OCI-LY7 (cell line): ENCODE measurements at regions of chr13 and their contacts with region 1.

Region 1: GRCh38 chr13:49495783-49496762 is at the start of gene PHF11:
- DNase-seq: peak; percentile 94
- H3K4me3 ChIP-seq: peak within 1 kb of the TSS; percentile 76
- H3K27ac ChIP-seq: peak within 1 kb of the TSS; percentile 91
- H3K4me1 ChIP-seq: peaks cover 44% of the 10 kb centered on the region
- CTCF ChIP-seq: peak; percentile 36; the same call in 1 of the 2 replicates
- total RNA-seq, gene PHF11: 29.9 and 32.8 TPM in 2 replicates

Region 2: DNA sequence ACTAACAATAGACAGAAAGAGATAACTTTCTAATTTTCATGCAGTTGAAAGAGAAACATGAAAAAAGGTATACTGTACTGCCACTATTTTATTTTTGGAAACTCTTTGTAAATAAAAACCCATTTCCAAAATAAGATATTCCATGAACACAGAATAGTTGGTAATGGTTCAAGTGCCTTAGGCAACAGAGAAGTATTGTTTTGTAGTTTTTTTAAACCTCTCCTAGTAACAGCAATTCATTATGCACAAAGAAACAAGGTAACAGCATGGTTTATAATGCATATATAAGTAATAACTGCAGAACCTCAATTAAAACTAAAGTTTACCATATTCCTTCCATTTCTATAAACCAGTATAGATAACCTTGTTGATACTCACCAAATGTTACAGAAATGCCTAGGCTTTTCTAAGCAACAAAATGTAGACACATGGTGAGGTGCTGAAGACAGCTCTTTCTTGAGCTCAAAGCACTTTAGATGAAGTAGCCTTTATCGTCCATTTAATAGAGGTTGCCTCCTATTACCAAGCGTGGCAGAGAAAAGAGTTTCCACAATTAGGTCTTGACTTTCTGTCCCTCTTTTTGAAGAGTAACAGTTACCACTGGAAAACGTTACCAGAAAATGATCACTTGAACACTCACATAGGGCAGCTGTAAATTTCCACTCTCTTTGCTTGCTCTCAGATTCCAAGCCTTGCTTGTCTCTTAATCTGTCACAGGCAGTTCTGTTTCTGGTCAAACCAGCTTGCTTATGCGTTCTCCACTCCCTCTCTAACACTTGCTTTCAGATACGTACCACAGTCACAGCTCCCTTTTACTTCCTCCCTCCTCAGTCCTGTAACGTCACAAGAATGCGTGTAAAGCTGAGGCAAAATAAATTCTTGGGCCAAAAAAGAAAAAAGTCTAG is 95.1 kb before region 1 on chr13:
- CTCF ChIA-PET with region 1: no interaction called
- POLR2A ChIA-PET with region 1: no interaction called
- intact Hi-C with region 1: no loop called
- DNase-seq: peak; percentile 87
- H3K4me3 ChIP-seq: peak overlapping the region; percentile 75
- H3K27ac ChIP-seq: peak overlapping the region; percentile 86
- H3K4me1 ChIP-seq: peaks cover 35% of the 10 kb centered on the region
- CTCF ChIP-seq: no peak

Region 3: DNA sequence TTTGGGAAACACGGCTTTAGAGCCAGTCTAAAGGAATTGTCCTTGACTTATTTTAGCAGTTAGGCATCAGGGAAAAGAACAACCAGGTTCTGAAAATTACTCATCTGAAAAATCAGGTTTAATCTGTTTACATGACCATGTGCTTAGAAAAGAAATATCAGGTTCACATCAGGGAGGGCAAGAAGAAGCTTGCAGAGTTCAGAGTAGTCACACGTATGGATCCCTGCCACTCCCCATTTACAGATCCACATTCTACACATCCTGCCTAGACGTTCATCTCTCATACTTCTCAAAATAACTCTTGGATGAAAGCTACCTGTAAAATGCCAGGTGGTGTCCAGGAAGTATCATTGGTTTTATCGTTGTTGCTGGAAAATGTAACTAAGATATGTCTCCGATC is 14.3 kb before region 1 on chr13:
- CTCF ChIA-PET with region 1: no interaction called
- POLR2A ChIA-PET with region 1: interaction called, 10 read pairs
- intact Hi-C with region 1: no loop called
- DNase-seq: no peak
- H3K4me3 ChIP-seq: no peak overlapping the region
- H3K27ac ChIP-seq: no peak overlapping the region
- H3K4me1 ChIP-seq: no peaks in the 10 kb centered on the region
- CTCF ChIP-seq: no peak

Region 4: DNA sequence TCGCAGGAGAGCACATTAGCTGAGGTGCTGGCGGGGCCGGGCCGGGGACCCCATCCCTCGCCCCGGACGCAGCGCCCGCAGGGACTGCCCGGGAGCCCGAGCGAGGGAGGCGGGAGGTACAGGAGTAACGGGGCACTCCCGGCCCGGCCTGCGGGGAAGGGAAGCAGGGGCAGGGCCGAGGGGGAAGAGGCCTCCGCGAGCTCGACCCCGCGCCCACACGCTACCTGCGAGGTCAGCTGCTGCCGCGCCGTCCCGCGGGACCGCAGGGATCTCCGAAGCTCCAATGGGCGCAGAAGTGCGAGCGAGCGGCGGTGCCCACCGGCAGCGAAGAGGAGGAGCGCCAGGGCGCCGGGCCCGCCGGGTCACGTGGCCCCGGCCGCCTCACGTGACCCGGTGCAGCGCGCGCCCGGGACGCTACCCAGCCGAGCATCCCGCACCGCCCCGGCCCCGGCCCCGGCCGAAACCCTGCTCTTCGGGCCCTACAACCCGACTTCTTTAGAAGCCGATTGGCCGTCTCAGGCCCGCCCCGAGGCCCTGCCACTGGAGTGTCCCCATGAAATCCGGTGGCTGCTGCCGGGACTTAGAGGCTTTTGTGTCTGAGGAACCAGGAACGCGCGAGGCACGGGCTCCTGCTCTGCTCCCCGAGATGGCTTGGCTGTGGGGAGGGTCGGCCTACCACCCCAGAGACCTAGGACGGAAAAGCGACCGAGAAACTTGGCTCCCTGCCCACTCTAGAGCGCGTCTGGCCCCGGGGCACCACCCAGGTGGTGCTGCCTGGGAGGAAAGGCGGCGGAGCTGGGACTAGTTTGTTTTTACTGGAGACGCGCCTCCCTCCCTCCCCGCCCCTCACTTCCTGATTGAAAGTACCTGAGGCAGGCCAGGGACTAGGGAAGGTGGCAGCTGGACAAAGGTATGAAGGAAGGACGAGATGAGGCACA is 89.4 kb after region 1 on chr13 and contains the start of gene RCBTB1:
- CTCF ChIA-PET with region 1: no interaction called
- POLR2A ChIA-PET with region 1: no interaction called
- intact Hi-C with region 1: loop called (anchors 5 kb)
- DNase-seq: peak; percentile 84
- H3K4me3 ChIP-seq: peak within 1 kb of the TSS; percentile 90
- H3K27ac ChIP-seq: peak within 1 kb of the TSS; percentile 71
- H3K4me1 ChIP-seq: peaks cover 31% of the 10 kb centered on the region
- CTCF ChIP-seq: no peak
- total RNA-seq, gene RCBTB1: 13.4 and 15.1 TPM in 2 replicates

Region 5: GRCh38 chr13:49908637-49909036 is 412.6 kb after region 1 on chr13:
- CTCF ChIA-PET with region 1: no interaction called
- POLR2A ChIA-PET with region 1: no interaction called
- intact Hi-C with region 1: no loop called
- DNase-seq: peak; percentile 23
- H3K4me3 ChIP-seq: no peak overlapping the region
- H3K27ac ChIP-seq: no peak overlapping the region
- H3K4me1 ChIP-seq: no peaks in the 10 kb centered on the region
- CTCF ChIP-seq: peak; percentile 68

Region 6: DNA sequence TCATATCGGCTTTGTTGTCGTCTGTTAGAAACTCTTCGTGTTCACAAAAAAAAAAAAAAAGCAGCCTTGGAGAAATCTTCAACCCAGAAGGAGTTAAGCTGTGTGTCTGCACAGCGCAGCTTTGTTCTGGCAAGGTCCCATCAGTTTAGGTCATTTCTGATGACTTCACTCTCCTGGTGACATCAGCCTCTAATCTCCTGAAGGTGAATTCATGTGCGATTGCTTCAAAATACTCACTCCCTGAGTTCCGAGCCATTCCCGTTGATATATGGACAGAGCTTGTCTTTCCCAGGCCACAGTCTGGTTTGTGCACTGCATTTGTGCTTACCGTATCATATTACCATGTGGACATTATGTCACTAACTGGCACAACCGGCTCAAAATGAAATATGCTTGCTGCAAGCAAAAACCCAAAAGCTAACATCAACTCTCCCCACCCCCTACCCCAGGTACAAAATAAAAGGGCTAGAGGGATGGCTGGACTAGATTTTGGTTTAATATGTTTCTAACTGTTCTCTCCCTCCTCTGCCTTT is 861.6 kb after region 1 on chr13:
- CTCF ChIA-PET with region 1: no interaction called
- POLR2A ChIA-PET with region 1: no interaction called
- intact Hi-C with region 1: no loop called
- DNase-seq: no peak
- H3K4me3 ChIP-seq: no peak overlapping the region
- H3K27ac ChIP-seq: no peak overlapping the region
- H3K4me1 ChIP-seq: peaks cover 38% of the 10 kb centered on the region
- CTCF ChIP-seq: no peak

Region 7: DNA sequence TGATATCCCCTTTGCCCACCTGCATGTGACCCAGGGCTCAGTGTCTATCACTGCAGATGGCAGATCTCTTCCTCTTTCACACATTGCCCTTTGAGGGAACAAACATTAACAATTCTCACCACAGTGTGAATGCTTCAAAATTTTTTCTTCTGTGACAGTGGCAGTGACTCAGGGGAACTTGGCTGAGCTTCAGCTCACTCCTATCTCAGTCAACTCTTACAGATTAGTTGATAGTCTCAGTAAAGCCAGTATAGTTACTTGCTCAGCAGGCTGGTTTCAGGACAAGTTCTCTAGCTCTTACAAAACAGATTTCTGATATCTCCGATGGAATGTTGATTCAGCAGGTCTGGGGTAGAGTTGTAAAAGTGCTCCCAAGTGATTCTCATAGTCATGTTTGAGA is 1180.5 kb after region 1 on chr13:
- CTCF ChIA-PET with region 1: no interaction called
- POLR2A ChIA-PET with region 1: no interaction called
- intact Hi-C with region 1: no loop called
- DNase-seq: peak; percentile 9
- H3K4me3 ChIP-seq: no peak overlapping the region
- H3K27ac ChIP-seq: no peak overlapping the region
- H3K4me1 ChIP-seq: no peaks in the 10 kb centered on the region
- CTCF ChIP-seq: no peak